Ascending aorta (tissue), 2 donors: ENCODE measurements at regions of chr5 and their contacts with region 1.

Region 1: GRCh38 chr5:36870399-36871040 is 6.0 kb upstream of the NIPBL start:
- DNase-seq: no peak
- H3K4me3 ChIP-seq: no peak overlapping the region
- H3K27ac ChIP-seq: no peak overlapping the region
- H3K4me1 ChIP-seq: peaks cover 0 to 15% of the 10 kb centered on the region in 2 donors
- H3K27me3 ChIP-seq: no peaks in the 10 kb centered on the region
- CTCF ChIP-seq: peak; percentile 38 to 57 (median 39)

Region 2: DNA sequence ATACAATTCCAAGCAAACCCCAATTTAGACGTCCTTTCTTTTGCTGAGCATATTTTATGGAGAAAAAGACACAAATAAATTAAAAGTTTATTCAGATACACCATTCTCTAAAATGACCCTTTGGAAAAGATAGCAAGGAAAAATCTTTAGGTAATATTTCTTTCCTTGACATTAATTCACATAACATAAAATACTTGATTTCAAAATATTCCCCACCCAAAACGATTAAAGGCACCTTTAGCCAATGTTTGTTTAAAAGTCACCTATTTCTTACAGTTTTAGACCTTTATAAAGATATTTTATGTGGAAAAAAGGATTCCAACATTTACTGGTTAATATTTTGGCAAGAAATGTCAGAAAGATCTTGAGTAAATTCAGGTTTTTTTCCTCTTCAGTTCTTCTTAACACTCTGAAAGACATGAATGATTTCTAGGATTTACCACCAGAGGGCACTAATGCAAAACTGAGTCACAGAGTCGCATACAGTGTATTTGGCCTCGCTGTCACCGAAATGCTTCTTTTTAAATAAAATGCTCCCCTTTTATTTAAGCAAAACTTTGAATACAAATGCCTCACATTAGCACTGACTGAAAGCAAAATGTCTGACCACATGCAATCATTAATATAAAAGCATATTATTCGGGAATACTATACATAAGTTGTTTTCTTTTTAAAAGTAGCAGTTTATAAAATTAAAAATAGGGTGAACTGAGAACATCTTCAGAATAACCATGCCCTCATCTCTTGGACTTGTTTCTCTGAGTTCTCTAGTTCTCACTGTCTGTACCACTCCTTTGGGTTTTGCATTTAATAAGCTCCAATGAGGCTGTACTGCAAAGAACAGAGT is 141.6 kb before region 1 on chr5:
- intact Hi-C with region 1: loop called (anchors 5 kb)
- DNase-seq: no peak
- H3K4me3 ChIP-seq: no peak overlapping the region
- H3K27ac ChIP-seq: no peak overlapping the region
- H3K4me1 ChIP-seq: no peaks in the 10 kb centered on the region
- H3K27me3 ChIP-seq: no peaks in the 10 kb centered on the region
- CTCF ChIP-seq: peak; percentile 34 to 63 (median 59)